Activated CD4-positive, alpha-beta T cell treated with anti-CD3 and anti-CD28 coated beads, Interleukin-2, amount 10 ng/mL, durations not matched to agents 24 days and 14 days (primary cell): ENCODE measurements at regions of chr14 and their contacts with region 1.

Region 1: GRCh38 chr14:91996948-91997371 is 42.9 kb downstream of the TRIP11 start:
- DNase-seq: peak; percentile 64
- H3K4me3 Mint-ChIP-seq: no peak overlapping the region
- H3K27ac Mint-ChIP-seq: no peak overlapping the region
- H3K4me1 Mint-ChIP-seq: peaks cover 24% of the 10 kb centered on the region
- H3K27me3 Mint-ChIP-seq: no peaks in the 10 kb centered on the region

Region 2: DNA sequence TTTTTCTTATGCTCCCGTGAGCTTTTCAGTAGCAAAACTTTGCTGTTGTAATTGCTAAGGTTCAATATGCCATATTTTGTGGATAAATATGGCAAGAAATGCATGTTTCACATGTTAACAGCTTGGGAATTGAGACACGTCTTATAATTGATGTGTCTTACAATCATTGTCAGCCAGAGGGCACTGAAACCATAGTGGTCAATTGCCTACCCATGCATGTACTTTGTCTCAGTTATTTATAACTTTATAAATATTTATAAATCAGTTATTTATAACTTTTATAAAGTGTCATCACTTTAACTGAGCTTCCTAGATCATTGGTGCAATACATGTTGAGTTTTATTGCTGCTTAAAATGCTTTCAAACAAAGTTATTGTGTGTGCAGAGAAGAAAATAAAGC is 347.0 kb before region 1 on chr14:
- intact Hi-C with region 1: loop called (anchors 10 kb)
- DNase-seq: peak; percentile 75
- H3K4me3 Mint-ChIP-seq: no peak overlapping the region
- H3K27ac Mint-ChIP-seq: no peak overlapping the region
- H3K4me1 Mint-ChIP-seq: no peaks in the 10 kb centered on the region
- H3K27me3 Mint-ChIP-seq: peaks cover 1% of the 10 kb centered on the region

Region 3: GRCh38 chr14:91947471-91948184 is 49.3 kb before region 1 on chr14 and contains the start of gene FBLN5:
- intact Hi-C with region 1: loop called (anchors 2 kb)
- DNase-seq: peak; percentile 68
- H3K4me3 Mint-ChIP-seq: peak within 1 kb of the TSS; percentile 84
- H3K27ac Mint-ChIP-seq: no peak within 1 kb of the TSS
- H3K4me1 Mint-ChIP-seq: peaks cover 10% of the 10 kb centered on the region
- H3K27me3 Mint-ChIP-seq: peaks cover 47% of the 10 kb centered on the region
- total RNA-seq, gene FBLN5: 0.68 and 1.3 TPM in 2 replicates